Activated CD8-positive, alpha-beta memory T cell treated with anti-CD3 and anti-CD28 coated beads, Interleukin-2, amount 10 ng/mL, durations not matched to agents 7 days and 5 days (primary cell): ENCODE measurements at regions of chr14 and their contacts with region 1.

Region 1: DNA sequence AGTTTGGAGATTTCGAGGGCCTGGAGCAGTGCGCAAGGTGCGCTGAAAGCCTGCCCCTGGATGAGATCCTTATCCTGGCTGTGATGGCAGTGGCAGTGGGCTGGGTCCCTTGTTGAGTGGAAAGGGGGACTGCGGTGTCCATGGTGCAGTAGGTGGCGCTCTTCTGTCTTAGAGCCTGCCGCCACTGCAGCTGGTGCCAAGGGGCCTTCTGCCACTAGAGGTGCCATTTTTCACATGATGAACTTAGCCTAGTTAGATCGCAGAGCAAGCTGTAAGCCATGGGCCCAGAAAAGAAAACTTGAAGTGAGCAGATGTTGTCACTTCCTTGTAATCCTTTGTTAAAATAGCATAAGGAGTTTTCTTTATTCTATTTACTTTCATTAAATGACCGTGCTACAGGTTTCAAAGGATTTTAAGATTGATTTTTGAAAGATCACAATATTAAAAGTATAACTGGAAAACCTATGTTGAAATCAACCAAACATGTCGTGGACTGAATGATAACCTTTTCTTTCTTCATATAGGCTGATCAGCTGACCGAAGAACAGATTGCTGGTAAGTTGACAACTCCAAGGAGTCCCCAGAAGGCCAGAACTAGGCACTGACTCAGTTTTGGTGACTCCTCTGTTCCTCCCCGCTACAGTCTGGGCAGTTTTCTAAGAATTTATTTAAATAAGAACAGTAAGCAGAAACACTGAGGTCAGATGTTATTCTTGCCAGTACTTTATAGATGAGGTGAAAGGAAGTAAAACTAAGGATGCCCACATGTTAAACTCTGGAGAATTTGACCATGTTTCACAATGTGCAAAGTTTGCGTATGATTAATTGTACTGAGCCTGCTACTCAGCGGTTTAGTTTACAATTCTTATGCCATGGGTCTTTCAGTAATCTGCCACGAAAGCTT is 3.0 kb downstream of the CALM1 start:
- DNase-seq: peak; percentile 93
- ATAC-seq: peak; percentile 46
- H3K4me3 Mint-ChIP-seq: peak overlapping the region; percentile 99
- H3K27ac Mint-ChIP-seq: peak overlapping the region; percentile 99
- H3K4me1 Mint-ChIP-seq: peaks cover 51% of the 10 kb centered on the region
- H3K27me3 Mint-ChIP-seq: no peaks in the 10 kb centered on the region

Region 2: DNA sequence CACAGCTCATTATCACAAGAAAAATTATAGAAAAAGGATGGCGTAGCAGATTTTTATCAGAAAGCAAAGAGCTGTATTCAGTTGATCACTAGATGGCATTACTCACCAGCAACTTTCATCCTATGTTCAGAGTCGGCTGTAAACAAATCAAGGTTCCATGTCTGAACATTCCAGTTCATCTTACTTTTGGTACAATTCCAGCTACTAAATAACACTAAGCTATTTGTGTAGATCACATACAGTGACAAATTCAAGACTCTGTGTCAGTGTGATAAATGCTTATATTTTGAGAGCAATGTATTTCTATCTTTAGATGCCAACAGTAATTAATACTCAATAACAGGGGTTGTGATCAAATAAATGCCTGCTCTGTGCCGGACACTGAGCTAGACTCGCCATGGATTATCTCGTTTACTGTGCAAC is 98.1 kb before region 1 on chr14:
- CTCF ChIA-PET with region 1: interaction called, 10 read pairs
- DNase-seq: no peak
- ATAC-seq: peak; percentile 33
- H3K4me3 Mint-ChIP-seq: no peak overlapping the region
- H3K27ac Mint-ChIP-seq: no peak overlapping the region
- H3K4me1 Mint-ChIP-seq: peaks cover 14% of the 10 kb centered on the region
- H3K27me3 Mint-ChIP-seq: no peaks in the 10 kb centered on the region

Region 3: GRCh38 chr14:90383075-90383730 is 16.6 kb before region 1 on chr14:
- CTCF ChIA-PET with region 1: interaction called, 46 read pairs
- DNase-seq: peak; percentile 99
- ATAC-seq: peak; percentile 88
- H3K4me3 Mint-ChIP-seq: no peak overlapping the region
- H3K27ac Mint-ChIP-seq: no peak overlapping the region
- H3K4me1 Mint-ChIP-seq: peaks cover 15% of the 10 kb centered on the region
- H3K27me3 Mint-ChIP-seq: no peaks in the 10 kb centered on the region

Region 4: DNA sequence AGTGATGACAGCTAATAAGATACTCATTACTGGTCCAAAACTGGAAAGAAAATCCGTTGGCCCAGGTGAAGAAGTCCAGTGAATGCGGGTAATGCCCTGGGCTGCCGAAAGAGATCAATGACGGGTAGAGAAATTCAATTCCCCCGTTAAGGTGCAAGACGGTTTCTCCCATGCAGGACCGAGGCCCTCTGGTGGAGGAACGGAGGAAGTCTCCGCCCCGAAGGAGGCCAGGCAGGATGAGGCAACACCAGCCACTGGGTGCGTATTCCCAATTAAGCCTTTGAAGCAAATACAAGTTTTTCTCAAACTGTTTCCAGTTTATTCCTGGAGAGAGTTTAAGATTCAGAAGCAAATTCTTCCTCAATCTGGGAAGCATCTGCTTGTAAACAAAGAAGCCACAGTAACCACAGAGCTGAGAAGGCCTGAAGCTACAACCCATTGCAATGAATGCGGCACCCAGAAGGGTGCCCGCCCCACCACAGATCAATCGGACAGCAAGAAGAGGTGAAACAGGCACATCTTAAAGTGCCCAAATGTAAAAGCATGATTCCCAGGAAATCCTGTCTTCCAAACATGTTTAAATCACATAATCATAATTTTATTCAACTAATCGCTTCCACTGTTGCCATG is 297.9 kb after region 1 on chr14:
- CTCF ChIA-PET with region 1: interaction called, 19 read pairs
- DNase-seq: peak; percentile 85
- ATAC-seq: peak; percentile 88
- H3K4me3 Mint-ChIP-seq: no peak overlapping the region
- H3K27ac Mint-ChIP-seq: no peak overlapping the region
- H3K4me1 Mint-ChIP-seq: peaks cover 21% of the 10 kb centered on the region
- H3K27me3 Mint-ChIP-seq: no peaks in the 10 kb centered on the region